Activated CD4-positive, alpha-beta memory T cell treated with anti-CD3 and anti-CD28 coated beads, Interleukin-2, amount 10 ng/mL, durations not matched to agents 7 days and 5 days (primary cell): ENCODE measurements at regions of chr9 and their contacts with region 1.

Region 1: DNA sequence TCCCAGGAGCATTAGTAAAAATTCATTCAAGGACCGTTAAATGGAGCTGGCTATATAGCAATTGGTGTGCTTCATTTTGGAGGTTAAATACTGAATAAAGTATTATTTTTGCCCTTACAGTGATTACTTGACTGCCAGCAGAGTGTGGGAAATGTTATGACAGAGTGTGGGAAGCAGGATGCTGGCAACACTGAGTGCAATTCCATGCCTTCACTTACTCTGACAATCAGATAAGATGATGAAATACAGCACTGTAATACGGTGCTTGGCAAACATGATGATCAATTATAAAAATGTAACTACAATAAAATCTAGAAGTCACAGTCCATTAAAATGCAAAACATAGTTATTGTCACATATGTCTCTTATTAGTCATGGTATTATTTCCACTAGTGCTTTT is 651.3 kb downstream of the PTPRD start:
- DNase-seq: no peak
- H3K4me3 Mint-ChIP-seq: no peak overlapping the region
- H3K27ac Mint-ChIP-seq: no peak overlapping the region
- H3K4me1 Mint-ChIP-seq: no peaks in the 10 kb centered on the region
- H3K27me3 Mint-ChIP-seq: no peaks in the 10 kb centered on the region

Region 2: GRCh38 chr9:9846557-9846956 is 114.9 kb before region 1 on chr9:
- CTCF ChIA-PET with region 1: no interaction called
- POLR2A ChIA-PET with region 1: no interaction called
- DNase-seq: no peak
- H3K4me3 Mint-ChIP-seq: no peak overlapping the region
- H3K27ac Mint-ChIP-seq: no peak overlapping the region
- H3K4me1 Mint-ChIP-seq: peaks cover 2% of the 10 kb centered on the region
- H3K27me3 Mint-ChIP-seq: no peaks in the 10 kb centered on the region

Region 3: GRCh38 chr9:9942764-9943424 is 18.6 kb before region 1 on chr9:
- CTCF ChIA-PET with region 1: interaction called, 11 read pairs
- POLR2A ChIA-PET with region 1: no interaction called
- DNase-seq: peak; percentile 54
- H3K4me3 Mint-ChIP-seq: no peak overlapping the region
- H3K27ac Mint-ChIP-seq: no peak overlapping the region
- H3K4me1 Mint-ChIP-seq: no peaks in the 10 kb centered on the region
- H3K27me3 Mint-ChIP-seq: no peaks in the 10 kb centered on the region